ENCODE measurements at regions of chr17 and their contacts with region 1.

Region 1: DNA sequence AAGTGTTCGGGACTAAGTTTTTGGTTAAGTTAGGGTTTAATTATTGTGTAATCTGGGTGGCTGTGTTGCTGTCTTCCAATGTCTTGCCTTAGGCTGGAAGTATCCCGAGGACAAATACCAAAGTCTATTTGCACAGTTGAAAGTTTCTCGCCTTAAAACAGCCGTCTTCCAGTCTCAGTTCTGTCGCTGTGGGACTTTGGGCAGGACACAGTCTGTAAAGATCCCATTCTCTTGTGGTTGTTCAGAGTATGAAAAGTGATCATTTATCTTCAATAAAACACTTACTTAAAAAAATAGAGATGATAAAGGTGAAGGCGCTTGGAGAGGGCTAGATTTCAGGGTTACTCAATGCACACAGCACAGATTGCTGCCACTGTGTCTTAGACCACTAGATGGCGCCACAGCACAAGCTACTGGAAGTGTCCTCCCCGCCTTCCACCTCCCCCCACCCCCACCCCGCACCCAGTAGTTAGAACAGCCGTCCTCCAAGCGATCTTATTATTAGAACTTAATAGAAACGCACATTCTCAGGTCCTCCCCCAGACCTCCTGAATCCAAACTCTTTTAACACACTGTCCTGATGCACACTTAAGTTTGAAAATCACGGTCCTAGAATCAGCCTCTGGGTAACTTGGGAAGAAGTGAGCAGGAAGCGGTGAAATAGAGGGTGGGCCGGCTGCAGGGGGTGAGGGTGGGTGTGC is 45.9 kb downstream of the AKAP1 start:
- DNase-seq: peak; percentile 91
- H3K4me3 ChIP-seq: peak overlapping the region in 1 of 4 donors; percentile 17
- H3K27ac ChIP-seq: no peak overlapping the region
- H3K4me1 ChIP-seq: peaks cover 0 to 3% (median 0%) of the 10 kb centered on the region in 4 donors
- H3K27me3 ChIP-seq: no peaks in the 10 kb centered on the region
- CTCF ChIP-seq: peak; percentile 43 to 95 (median 54)
- EP300 ChIP-seq: no peak
- POLR2A ChIP-seq: no peak

Region 2: DNA sequence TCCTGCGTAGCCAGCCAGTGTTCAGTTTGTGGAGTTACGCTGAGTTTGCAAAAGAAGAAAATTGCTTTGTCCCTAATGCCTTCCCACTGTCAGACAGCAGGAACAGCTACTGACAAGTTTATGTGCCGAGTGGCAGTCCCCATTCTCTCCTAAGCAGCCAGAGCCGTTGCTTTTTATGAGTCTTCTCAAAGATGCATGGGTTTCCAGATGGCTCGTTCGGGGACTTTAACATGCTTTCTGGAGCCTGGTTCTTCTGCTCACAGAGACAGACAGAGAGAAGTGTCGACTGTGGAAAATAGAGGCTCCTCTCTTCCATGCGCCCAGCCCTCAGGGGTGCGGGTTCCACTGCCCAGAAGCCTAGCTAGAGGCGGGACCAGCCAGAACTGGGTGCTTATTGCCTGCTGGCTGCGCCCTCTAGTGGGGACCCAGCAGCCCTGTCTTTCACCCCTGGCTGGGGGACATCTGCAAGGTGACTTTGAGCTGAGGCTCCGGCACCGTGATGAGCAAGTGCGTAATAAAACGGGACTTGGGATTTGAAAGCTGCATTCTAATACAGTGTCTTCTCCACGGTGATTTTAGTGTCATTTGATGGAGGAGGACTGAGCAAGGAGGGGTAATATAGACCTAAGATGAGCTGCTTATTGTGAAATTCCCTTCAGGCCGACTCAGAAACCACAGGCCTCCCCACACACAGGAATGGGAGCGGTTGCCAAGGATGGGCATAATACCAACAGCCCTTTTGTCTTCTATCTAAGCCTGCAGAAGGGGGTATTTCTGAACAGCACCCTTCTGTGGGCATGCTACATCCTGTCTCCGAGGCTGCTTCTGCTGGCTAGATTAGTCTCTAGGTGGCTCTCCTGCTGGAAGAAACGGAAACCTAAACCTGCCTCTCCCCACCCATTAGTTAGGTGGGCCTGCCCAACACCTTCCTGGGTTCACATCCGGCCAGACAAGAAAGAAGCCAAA is 541.0 kb after region 1 on chr17:
- intact Hi-C with region 1: loop called (anchors 5 kb)
- DNase-seq: peak; percentile 89
- H3K4me3 ChIP-seq: no peak overlapping the region
- H3K27ac ChIP-seq: no peak overlapping the region
- H3K4me1 ChIP-seq: peaks cover 0 to 11% (median 5%) of the 10 kb centered on the region in 4 donors
- H3K27me3 ChIP-seq: no peaks in the 10 kb centered on the region
- CTCF ChIP-seq: peak; percentile 73 to 90 (median 81)
- EP300 ChIP-seq: no peak
- POLR2A ChIP-seq: no peak

Region 3: DNA sequence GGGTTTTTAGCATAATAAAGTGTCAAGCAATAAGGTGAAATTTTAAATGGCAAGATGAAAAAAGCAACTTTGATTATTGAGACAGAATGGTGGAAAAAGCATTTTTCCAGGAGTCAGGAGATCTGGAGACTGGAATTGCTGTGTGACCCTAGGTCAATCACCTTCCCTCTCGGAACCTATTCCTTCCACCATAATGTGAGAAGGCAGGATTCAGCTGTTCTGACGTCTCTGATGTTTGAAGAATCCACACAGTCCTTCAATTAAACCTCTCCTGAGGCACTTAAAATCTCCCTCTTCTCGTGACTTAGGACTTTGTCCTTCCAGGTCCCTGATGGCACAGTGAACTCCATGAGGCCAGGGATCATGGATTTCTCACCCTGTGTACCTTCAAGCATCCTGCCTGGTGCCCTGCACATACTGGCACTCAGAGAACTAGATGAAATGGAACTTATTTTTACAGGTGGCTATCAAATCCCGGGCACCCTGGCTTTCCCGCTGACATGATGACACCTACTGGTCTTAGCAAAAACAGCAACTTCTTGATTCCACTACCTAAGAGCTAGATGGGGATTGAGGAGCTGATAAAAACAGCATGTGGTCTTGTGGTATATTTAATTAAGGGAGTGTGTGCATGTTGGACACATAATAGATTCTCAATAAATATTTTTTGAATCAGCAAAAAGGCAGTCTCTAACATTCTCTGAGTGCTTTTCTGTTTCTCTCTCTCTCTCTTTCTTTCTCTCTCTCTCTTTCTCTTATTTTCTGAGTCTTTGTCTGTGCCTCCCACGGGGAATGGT is 616.5 kb after region 1 on chr17:
- intact Hi-C with region 1: loop called (anchors 5 kb)
- DNase-seq: no peak
- H3K4me3 ChIP-seq: no peak overlapping the region
- H3K27ac ChIP-seq: no peak overlapping the region
- H3K4me1 ChIP-seq: no peaks in the 10 kb centered on the region
- H3K27me3 ChIP-seq: no peaks in the 10 kb centered on the region
- CTCF ChIP-seq: peak; percentile 36 to 63 (median 50)
- EP300 ChIP-seq: no peak
- POLR2A ChIP-seq: no peak

Region 4: DNA sequence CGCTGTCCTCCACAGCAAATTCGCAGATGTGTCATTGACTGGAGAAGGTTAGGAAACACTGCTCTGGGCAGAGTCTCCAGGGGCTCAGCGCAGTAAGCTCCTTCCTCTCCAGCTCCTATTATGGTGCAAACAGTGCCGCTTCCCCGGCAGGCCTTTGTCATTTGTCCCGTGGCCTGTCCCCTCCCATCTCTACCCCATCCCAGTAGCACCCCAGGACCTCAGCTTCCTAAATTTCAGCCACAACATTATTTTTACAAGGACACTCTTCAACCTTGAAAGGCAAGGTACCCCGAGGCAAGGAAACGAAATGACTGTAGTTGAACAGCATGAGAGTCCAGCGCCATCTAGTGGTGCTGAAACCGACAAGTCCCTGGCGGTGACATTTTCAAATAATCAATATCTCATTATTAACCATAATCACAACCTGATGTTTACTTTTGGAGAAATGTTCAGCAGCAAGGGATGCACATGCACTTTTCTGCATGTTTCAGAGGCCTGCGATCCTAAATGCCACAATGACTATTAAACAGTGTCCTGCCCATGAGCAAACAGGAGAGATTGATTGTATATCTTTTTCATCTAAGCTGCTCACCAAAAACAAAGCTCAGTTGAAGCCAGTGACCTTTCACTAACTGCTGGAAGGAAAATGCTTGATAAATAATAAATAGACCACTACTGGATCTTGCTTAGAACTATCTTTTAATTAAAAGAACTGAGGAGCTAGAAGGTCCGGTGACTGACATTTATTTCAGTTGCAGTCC is 702.4 kb after region 1 on chr17:
- intact Hi-C with region 1: loop called (anchors 5 kb)
- DNase-seq: peak; percentile 86
- H3K4me3 ChIP-seq: peak overlapping the region; percentile 27 to 50 (median 45)
- H3K27ac ChIP-seq: peak overlapping the region; percentile 78 to 83 (median 82)
- H3K4me1 ChIP-seq: peaks cover 0 to 22% (median 18%) of the 10 kb centered on the region in 4 donors
- H3K27me3 ChIP-seq: no peaks in the 10 kb centered on the region
- CTCF ChIP-seq: peak; percentile 84 to 94 (median 90)
- EP300 ChIP-seq: no peak
- POLR2A ChIP-seq: no peak

Region 5: GRCh38 chr17:58006924-58007780 is 876.2 kb after region 1 on chr17 and contains the start of gene SRSF1:
- intact Hi-C with region 1: loop called (anchors 5 kb)
- DNase-seq: peak; percentile 99
- H3K4me3 ChIP-seq: peak within 1 kb of the TSS; percentile 78 to 93 (median 83)
- H3K27ac ChIP-seq: peak within 1 kb of the TSS; percentile 97 to 99 (median 98)
- H3K4me1 ChIP-seq: peaks cover 0 to 46% (median 42%) of the 10 kb centered on the region in 4 donors
- H3K27me3 ChIP-seq: no peaks in the 10 kb centered on the region
- CTCF ChIP-seq: no peak
- EP300 ChIP-seq: peak in 1 of 4 donors; percentile 4
- POLR2A ChIP-seq: peak; percentile 93
- total RNA-seq, gene SRSF1: 138 to 214 (median 151) TPM

Region 6: GRCh38 chr17:58112970-58113631 is 982.2 kb after region 1 on chr17:
- intact Hi-C with region 1: loop called (anchors 10 kb)
- DNase-seq: peak; percentile 85
- H3K4me3 ChIP-seq: no peak overlapping the region
- H3K27ac ChIP-seq: no peak overlapping the region
- H3K4me1 ChIP-seq: no peaks in the 10 kb centered on the region
- H3K27me3 ChIP-seq: no peaks in the 10 kb centered on the region
- CTCF ChIP-seq: peak; percentile 93 to 96 (median 94)
- EP300 ChIP-seq: no peak
- POLR2A ChIP-seq: no peak